Aorta (tissue), 5 donors: ENCODE measurements at regions of chr4 and their contacts with region 1.

Region 1: GRCh38 chr4:74932816-74933561 is at the start of gene PARM1:
- DNase-seq: peak; percentile 95 to 98
- ATAC-seq: peak; percentile 96
- H3K4me3 ChIP-seq: peak within 1 kb of the TSS; percentile 85 to 93
- H3K27ac ChIP-seq: peak within 1 kb of the TSS; percentile 6 to 86
- H3K4me1 ChIP-seq: peaks cover 0 to 5% of the 10 kb centered on the region in 2 donors
- H3K27me3 ChIP-seq: no peaks in the 10 kb centered on the region
- total RNA-seq, gene PARM1: 48.5 to 202 TPM

Region 2: GRCh38 chr4:74874753-74875367 is 58.1 kb before region 1 on chr4:
- intact Hi-C with region 1: loop called (anchors 5 to 10 kb)
- DNase-seq: no peak
- ATAC-seq: peak; percentile 95
- H3K4me3 ChIP-seq: no peak overlapping the region
- H3K27ac ChIP-seq: peak overlapping the region in 1 of 2 donors; percentile 39
- H3K4me1 ChIP-seq: peaks cover 0 to 10% of the 10 kb centered on the region in 2 donors
- H3K27me3 ChIP-seq: no peaks in the 10 kb centered on the region

Region 3: GRCh38 chr4:74969507-74970474 is 36.8 kb after region 1 on chr4:
- intact Hi-C with region 1: loop called in 1 of 2 experiments (anchors 5 kb)
- DNase-seq: no peak
- ATAC-seq: peak; percentile 74
- H3K4me3 ChIP-seq: no peak overlapping the region
- H3K27ac ChIP-seq: peak overlapping the region; percentile 1 to 70
- H3K4me1 ChIP-seq: peaks cover 12 to 19% of the 10 kb centered on the region in 2 donors
- H3K27me3 ChIP-seq: no peaks in the 10 kb centered on the region

Region 4: DNA sequence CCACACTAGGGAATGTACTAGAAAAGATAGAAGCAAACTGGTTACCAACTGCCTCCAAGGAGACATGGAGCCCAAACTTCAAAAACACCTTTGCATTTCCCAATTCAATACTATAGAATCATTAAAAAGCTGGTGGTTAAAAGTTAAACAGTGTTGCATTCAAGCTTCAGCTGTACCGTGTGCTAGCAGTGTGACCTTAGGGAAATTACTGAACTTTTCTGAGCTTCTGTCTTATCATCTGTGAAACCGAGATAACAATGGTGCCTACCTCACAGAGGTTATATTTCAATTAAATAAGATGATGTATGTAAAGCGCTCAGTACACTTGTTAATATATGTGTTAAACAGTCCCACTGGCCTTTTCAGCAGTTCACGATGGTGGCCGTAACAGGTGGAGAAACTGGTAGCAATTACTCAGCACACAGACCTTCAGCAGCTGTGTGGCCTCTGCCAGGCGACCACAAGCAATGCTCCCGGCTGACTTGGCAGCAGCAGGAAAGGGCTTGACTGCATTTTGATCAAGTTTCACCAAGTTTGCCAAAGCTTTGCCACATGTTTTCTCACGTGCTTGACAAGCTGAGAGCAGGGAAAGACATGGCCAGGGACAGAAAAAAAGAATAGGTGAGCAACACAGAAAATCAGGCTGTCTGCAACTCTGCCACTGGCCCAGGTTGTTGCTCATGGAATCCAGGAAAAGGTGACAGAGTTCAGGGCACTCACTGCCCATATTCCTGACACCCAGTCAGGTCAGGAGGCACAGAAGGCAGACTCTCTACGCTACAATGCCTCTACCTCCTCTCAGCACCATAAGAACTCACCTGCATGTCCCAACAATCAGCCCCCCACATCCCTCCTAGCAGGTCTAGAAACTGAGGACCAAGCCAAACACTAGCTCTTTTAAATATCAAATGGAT is 72.0 kb after region 1 on chr4:
- intact Hi-C with region 1: loop called in 1 of 2 experiments (anchors 5 kb)
- DNase-seq: no peak
- ATAC-seq: no peak
- H3K4me3 ChIP-seq: no peak overlapping the region
- H3K27ac ChIP-seq: peak overlapping the region in 1 of 2 donors; percentile 41
- H3K4me1 ChIP-seq: peaks cover 4 to 9% of the 10 kb centered on the region in 2 donors
- H3K27me3 ChIP-seq: no peaks in the 10 kb centered on the region

Region 5: DNA sequence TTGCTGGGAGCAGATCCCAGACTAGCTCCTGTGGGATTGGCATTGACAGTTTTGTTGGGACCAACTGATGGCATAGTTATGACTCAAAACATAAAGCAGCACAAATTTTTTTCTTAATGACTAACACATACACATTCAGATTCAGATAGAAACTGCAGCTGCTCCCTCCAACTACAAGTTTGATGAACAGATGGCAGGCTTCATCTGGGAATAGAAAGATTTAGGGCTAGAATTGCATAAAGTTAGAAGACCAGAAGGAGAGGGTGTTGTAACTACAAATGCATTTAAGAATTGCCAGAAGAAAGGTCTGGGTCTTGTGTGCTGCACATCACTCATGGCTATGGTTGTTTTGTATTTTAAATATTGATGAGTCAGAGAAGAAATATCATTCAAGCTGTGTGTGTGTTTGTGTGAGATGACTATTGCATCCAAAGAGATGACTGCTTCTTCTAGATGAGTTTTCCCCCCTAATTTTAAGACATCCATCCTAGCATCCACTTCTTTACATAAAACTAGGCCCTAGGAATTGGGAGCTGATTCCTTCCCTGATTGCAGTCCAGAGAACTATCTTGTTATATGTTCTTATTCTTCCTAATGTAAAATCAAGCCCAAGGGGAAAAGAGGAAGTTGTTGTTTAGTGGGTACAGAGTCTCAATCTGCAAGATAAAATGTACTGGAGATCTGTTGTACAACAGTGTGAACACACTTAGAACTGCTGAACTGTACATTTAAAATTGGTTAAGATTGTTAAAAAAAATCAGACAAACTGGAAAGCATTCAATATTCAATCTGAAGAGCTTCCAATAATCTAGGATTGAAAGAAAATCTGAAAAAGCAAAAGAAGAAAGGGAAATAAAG is 175.0 kb after region 1 on chr4:
- intact Hi-C with region 1: loop called (anchors 10 kb)
- DNase-seq: no peak
- ATAC-seq: no peak
- H3K4me3 ChIP-seq: no peak overlapping the region
- H3K27ac ChIP-seq: no peak overlapping the region
- H3K4me1 ChIP-seq: no peaks in the 10 kb centered on the region
- H3K27me3 ChIP-seq: no peaks in the 10 kb centered on the region

Region 6: GRCh38 chr4:75289914-75290582 is 357.1 kb after region 1 on chr4:
- intact Hi-C with region 1: loop called in 1 of 2 experiments (anchors 2 kb)
- DNase-seq: no peak
- ATAC-seq: peak; percentile 57
- H3K4me3 ChIP-seq: no peak overlapping the region
- H3K27ac ChIP-seq: no peak overlapping the region
- H3K4me1 ChIP-seq: no peaks in the 10 kb centered on the region
- H3K27me3 ChIP-seq: no peaks in the 10 kb centered on the region

Region 7: DNA sequence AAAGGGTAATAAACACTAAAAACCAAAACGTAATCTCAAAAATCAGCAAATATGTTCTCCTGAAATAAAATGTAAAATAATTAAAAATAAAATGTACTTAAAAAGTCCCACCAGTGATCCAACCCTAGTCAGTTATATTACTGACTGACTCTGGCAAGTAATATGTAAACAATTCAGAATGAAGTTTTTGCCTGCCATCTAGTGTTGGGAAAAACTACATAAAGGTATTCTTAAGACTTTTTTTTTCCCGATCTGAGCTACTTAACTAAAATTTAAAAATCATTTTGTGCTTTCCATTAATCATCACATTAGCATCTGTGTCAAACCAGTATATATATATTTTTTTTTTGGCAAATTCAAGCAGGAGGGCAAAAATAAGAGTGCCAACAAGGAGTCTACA is 557.2 kb after region 1 on chr4:
- intact Hi-C with region 1: loop called (anchors 5 kb)
- DNase-seq: no peak
- ATAC-seq: no peak
- H3K4me3 ChIP-seq: no peak overlapping the region
- H3K27ac ChIP-seq: no peak overlapping the region
- H3K4me1 ChIP-seq: no peaks in the 10 kb centered on the region
- H3K27me3 ChIP-seq: no peaks in the 10 kb centered on the region